Activated B cell treated with CpG ODN at 0.5 μM for 24 hours (primary cell): ENCODE measurements at regions of chr20 and their contacts with region 1.

Region 1: DNA sequence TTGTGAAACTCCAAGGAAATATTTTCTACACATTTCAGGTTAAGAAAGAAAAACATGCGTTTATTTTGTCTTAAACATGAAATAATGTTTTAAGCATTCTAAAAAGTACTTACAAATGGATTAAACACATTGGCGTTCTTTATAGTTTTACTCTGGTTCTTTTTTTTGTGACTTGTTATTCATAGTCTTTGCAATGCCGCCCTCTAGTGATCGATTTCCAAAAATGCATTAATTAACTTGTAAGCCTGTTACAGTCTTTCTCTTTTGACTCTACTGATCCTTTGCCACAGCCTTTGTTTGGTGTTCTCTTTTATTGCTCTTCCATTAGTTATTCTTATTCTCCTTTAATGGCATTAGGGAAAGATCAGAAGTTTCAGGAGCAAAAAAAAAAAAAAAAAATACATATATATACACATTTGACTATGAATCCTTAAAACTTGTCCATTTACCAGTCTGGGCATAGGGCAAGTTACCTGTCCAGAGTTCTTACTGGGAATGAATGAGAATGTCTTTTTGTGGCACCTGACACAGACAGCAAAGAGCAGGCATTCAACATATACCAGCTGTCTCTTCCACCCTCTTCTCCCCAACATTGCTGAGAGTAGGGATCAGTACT is 59.9 kb downstream of the MACROD2 start:
- DNase-seq: no peak
- ATAC-seq: peak; percentile 31
- H3K4me3 Mint-ChIP-seq: no peak overlapping the region
- H3K27ac Mint-ChIP-seq: no peak overlapping the region
- H3K4me1 Mint-ChIP-seq: no peaks in the 10 kb centered on the region
- H3K27me3 Mint-ChIP-seq: peaks cover 2% of the 10 kb centered on the region
- CTCF ChIP-seq: peak; percentile 64

Region 2: DNA sequence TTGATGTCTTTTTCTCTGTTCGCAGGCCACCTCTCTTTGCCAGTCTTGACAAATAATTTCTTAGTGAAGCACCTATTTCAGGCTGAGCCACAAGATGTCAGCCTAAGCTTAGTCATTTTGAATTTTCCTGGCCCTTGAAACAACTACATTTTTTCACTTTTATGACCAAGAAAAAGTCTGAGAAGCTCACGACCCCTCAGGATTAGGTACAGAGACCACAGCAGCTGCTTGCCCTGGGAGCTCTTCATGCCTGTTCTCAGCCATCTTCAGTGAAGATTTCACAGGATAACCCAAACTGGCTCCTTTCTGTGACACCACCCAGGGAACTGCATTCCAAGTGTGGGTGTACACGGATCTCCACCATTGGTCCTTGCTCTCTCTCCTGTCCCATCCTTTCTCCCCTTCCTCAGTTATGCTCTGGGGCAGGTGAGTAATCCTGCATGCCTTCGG is 1084.8 kb before region 1 on chr20:
- CTCF ChIA-PET with region 1: no interaction called
- POLR2A ChIA-PET with region 1: no interaction called
- intact Hi-C with region 1: loop called (anchors 10 kb)
- DNase-seq: no peak
- ATAC-seq: no peak
- H3K4me3 Mint-ChIP-seq: no peak overlapping the region
- H3K27ac Mint-ChIP-seq: no peak overlapping the region
- H3K4me1 Mint-ChIP-seq: no peaks in the 10 kb centered on the region
- H3K27me3 Mint-ChIP-seq: no peaks in the 10 kb centered on the region
- CTCF ChIP-seq: no peak

Region 3: DNA sequence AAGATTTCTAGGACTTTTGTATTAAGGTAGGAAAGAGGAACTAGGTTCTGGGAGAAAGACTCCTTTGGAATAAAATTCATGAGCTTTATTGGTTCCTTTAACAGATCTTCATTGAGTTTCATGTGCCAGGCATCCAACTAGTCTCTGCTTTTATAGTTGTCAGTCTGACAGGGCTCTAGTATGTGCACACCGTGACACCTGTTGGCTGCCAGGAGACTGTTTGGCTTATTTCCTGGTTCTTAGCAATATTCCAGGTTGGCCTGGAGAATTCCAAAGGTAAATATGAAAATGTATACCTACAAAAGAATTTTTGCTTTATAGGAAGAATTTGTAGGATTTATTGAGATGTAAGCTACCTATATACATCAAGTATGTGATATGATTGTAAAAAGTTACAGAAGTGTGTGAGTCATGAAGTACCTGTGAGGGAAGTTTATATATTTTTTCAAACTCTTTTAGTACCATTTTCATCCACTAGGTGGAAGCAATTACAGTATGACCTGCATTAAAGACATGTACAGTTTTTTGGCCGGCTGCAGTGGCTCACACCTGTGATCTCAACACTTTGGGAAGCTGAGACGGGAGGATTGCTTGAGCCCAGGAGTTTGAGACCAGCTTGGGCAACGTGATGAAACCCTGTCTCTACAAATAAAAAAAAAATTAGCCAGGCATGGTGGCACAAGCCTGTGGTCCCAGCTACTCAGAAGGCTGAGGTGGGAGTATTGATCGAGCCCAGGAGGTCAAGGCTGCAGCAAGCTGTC is 235.2 kb before region 1 on chr20:
- CTCF ChIA-PET with region 1: interaction called, 3 read pairs
- POLR2A ChIA-PET with region 1: no interaction called
- intact Hi-C with region 1: loop called (anchors 1 kb)
- DNase-seq: no peak
- ATAC-seq: peak; percentile 50
- H3K4me3 Mint-ChIP-seq: no peak overlapping the region
- H3K27ac Mint-ChIP-seq: no peak overlapping the region
- H3K4me1 Mint-ChIP-seq: no peaks in the 10 kb centered on the region
- H3K27me3 Mint-ChIP-seq: no peaks in the 10 kb centered on the region
- CTCF ChIP-seq: peak; percentile 38